MCF 10A (cell line): ENCODE measurements at regions of chr20 and their contacts with region 1.

Region 1: DNA sequence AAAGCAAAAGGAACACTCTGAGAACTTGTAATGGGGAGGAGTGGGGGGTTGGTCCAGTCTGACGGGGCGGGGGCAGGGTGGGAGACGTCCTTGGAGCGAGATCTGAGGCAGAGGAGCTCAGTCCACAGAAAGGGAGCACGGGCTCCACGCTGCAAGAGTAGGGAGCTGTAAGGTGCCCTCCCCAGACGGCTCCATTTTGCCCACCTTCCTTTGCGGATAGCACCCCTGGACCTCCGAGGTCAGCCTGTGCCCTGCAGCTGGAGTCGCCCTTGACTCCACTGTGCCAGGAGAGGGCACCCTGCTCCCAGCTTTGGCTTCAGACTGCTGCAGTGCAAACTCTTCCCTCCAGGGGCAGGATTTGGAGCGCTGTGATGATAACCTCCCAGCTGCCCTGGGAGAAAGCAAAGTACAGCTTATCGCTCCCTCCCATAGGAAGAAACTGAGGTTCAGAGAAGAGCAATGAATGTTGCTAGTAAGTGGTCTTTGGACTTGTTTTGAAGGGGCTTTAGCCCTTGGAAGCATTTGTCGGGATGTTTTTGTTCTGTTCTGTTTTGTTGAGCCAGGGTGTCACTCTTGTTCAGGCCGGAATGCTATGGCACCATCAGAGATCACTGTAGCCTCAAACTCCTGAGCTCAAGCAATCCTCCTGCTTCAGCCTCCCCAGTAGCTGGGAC is 9.5 kb upstream of the AHCY start:
- DNase-seq: peak; percentile 91
- H3K4me3 Mint-ChIP-seq: peak overlapping the region; percentile 35
- H3K27ac Mint-ChIP-seq: no peak overlapping the region
- H3K4me1 Mint-ChIP-seq: peaks cover 37% of the 10 kb centered on the region
- H3K27me3 Mint-ChIP-seq: no peaks in the 10 kb centered on the region
- CTCF ChIP-seq: peak; percentile 100

Region 2: DNA sequence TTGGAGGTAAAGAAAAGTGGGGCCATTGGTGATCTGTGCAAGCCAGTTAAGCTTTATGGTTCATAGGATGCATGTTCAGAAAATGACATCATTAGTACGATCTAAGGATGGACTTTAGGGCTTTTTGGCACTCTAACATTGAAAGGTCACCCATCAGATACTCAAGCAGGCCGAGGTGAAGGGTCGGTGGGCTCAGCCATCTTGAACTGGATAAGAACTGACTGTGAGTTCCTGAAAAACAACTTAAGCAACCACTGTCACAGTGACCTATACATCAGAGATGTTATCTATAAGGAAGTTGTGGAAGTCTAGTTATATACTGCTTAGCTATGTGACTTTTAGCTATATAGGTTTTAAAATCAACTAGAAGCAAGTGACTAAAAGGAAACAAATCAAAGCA is 37.4 kb after region 1 on chr20:
- CTCF ChIA-PET with region 1: interaction called, 24 read pairs
- POLR2A ChIA-PET with region 1: interaction called, 5 read pairs
- intact Hi-C with region 1: no loop called
- DNase-seq: no peak
- H3K4me3 Mint-ChIP-seq: no peak overlapping the region
- H3K27ac Mint-ChIP-seq: no peak overlapping the region
- H3K4me1 Mint-ChIP-seq: no peaks in the 10 kb centered on the region
- H3K27me3 Mint-ChIP-seq: no peaks in the 10 kb centered on the region
- CTCF ChIP-seq: no peak

Region 3: GRCh38 chr20:34397096-34397495 is 84.4 kb after region 1 on chr20:
- CTCF ChIA-PET with region 1: interaction called, 45 read pairs
- POLR2A ChIA-PET with region 1: interaction called, 6 read pairs
- intact Hi-C with region 1: no loop called
- DNase-seq: no peak
- H3K4me3 Mint-ChIP-seq: no peak overlapping the region
- H3K27ac Mint-ChIP-seq: no peak overlapping the region
- H3K4me1 Mint-ChIP-seq: peaks cover 15% of the 10 kb centered on the region
- H3K27me3 Mint-ChIP-seq: no peaks in the 10 kb centered on the region
- CTCF ChIP-seq: no peak

Region 4: GRCh38 chr20:34443546-34443945 is 130.9 kb after region 1 on chr20:
- CTCF ChIA-PET with region 1: interaction called, 27 read pairs
- POLR2A ChIA-PET with region 1: no interaction called
- intact Hi-C with region 1: no loop called
- DNase-seq: no peak
- H3K4me3 Mint-ChIP-seq: no peak overlapping the region
- H3K27ac Mint-ChIP-seq: no peak overlapping the region
- H3K4me1 Mint-ChIP-seq: no peaks in the 10 kb centered on the region
- H3K27me3 Mint-ChIP-seq: no peaks in the 10 kb centered on the region
- CTCF ChIP-seq: no peak

Region 5: DNA sequence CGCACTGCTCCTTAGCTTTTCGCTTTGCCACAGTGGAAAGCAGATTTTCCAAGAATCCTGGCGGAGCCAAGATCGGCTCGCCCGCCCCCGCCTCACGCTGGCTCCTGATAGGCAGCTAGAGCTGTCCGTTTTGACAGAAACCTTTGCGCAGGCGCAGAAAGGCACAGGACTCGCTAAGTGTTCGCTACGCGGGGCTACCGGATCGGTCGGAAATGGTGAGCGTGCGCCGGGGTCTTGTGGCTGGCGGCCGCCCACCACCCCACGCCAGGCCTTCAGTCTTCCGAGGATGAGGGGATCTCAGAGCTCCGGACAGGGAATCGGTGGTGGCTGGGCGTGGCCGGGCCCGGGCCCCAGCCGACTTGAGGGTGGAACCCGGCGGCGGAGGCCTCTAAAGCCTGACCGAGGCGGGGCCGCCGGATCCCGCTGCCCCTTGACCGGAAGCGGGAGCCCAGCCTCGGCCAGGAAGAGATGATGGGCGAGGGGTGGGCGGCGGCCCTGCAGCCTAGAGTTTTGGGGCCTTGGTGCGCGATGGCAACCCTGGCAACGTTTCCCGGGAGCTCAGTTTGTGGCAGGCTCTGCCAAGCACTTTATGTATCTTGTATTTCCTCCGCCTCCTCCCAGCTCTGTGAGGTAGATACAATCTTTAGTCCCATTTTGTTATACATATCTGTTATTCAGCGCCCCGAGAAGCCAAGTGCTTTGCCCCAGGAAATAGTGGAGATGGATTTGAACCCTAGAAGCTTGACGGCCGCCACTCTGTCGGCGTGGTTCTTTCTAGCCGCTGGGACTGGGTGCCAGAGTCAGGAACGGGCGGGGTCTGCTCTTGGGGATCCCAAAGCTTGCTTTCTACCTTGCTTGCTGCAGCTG is 203.8 kb after region 1 on chr20 and contains the start of gene DYNLRB1:
- CTCF ChIA-PET with region 1: interaction called, 40 read pairs
- POLR2A ChIA-PET with region 1: interaction called, 44 read pairs
- intact Hi-C with region 1: loop called (anchors 2 kb)
- DNase-seq: peak; percentile 97
- H3K4me3 Mint-ChIP-seq: peak within 1 kb of the TSS; percentile 97
- H3K27ac Mint-ChIP-seq: peak within 1 kb of the TSS; percentile 99
- H3K4me1 Mint-ChIP-seq: peaks cover 15% of the 10 kb centered on the region
- H3K27me3 Mint-ChIP-seq: no peaks in the 10 kb centered on the region
- CTCF ChIP-seq: no peak
- total RNA-seq, gene DYNLRB1: 127 and 145 TPM in 2 replicates

Region 6: DNA sequence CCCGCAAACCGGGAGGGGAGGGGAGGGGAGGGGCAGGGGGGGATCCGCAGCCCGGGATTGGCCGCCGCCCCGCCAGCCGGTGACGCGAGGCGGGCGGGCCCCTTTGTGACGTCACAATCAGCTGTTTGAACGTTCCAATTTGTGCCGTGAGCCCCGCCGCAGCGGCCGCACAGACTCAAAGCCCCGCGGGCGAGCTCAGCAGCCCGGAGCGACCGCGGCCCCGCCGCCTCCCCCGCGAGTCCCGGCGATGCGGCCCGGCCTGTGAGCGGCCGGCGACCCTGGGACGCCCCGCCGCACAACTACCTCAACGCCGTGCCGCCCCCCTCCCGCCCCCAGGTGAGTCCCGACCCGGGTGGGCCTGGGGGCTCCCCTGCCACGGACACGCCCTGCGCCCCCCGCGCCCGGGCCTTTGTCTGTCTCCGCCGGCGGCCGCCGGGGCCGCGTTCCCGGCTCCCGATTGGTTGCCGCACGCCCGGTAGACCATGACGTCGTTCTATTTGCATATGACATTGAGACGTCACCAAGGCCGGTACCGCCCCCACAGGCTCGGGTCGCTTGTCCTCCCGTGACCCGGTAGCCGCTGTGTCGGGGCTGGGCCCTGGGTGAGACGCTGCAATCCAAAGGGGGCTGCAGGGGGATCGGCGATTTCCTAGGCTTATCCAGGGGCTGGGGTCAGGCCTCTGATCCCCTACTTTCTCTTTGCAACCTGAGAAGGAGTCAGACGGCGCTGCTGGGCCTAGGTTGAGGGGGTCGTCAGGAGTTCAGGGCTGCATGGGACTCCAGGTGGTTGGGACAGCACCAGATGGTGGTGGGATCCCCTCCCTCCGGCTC is 391.7 kb after region 1 on chr20 and contains the start of gene TP53INP2:
- CTCF ChIA-PET with region 1: interaction called, 7 read pairs
- POLR2A ChIA-PET with region 1: interaction called, 3 read pairs
- intact Hi-C with region 1: loop called (anchors 5 kb)
- DNase-seq: peak; percentile 76
- H3K4me3 Mint-ChIP-seq: peak within 1 kb of the TSS; percentile 95
- H3K27ac Mint-ChIP-seq: peak within 1 kb of the TSS; percentile 77
- H3K4me1 Mint-ChIP-seq: peaks cover 8% of the 10 kb centered on the region
- H3K27me3 Mint-ChIP-seq: no peaks in the 10 kb centered on the region
- CTCF ChIP-seq: no peak
- total RNA-seq, gene TP53INP2: 1.8 and 3.6 TPM in 2 replicates